Activated CD8-positive, alpha-beta T cell treated with anti-CD3 and anti-CD28 coated beads, Interleukin-2, amount 10 ng/mL, durations not matched to agents 7 days and 5 days (primary cell): ENCODE measurements at regions of chr11 and their contacts with region 1.

Region 1: DNA sequence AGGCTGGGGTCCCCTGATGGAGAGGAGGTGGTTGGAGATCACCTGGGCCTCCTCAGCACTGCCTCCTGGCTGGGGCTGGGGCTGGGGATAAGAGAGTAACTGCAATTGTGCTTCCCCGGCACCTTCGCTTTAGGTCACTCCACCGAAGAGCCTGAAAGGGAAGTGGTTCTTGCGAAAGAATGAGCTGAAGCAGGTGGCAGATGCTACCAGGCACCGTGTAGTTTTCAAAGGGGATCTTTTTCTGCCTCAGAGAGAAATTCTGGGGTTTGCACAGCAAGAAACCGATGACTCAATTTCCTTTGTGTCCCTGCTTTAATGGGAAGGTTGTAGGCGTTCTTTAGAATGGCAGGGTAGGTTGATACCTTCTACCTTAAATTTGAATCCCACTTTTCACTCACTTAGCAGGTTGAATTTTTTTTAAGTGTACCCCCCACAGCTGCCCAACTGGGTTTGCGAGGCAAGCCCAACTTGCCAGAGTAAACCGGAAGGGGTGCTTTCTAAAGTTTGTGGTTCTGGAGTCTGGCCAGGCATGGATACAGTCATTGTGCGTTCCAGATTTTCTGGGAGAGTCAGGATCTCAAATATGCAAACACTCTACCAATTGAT is 5.3 kb downstream of the CD44 start:
- DNase-seq: peak; percentile 81
- ATAC-seq: peak; percentile 31
- H3K4me3 Mint-ChIP-seq: peak overlapping the region; percentile 73
- H3K27ac Mint-ChIP-seq: peak overlapping the region; percentile 91
- H3K4me1 Mint-ChIP-seq: peaks cover 76% of the 10 kb centered on the region
- H3K27me3 Mint-ChIP-seq: no peaks in the 10 kb centered on the region

Region 2: GRCh38 chr11:35097814-35098455 is 46.3 kb before region 1 on chr11:
- CTCF ChIA-PET with region 1: no interaction called
- POLR2A ChIA-PET with region 1: no interaction called
- DNase-seq: no peak
- ATAC-seq: no peak
- H3K4me3 Mint-ChIP-seq: no peak overlapping the region
- H3K27ac Mint-ChIP-seq: no peak overlapping the region
- H3K4me1 Mint-ChIP-seq: peaks cover 17% of the 10 kb centered on the region
- H3K27me3 Mint-ChIP-seq: no peaks in the 10 kb centered on the region

Region 3: GRCh38 chr11:35158701-35159510 is 14.7 kb after region 1 on chr11:
- CTCF ChIA-PET with region 1: interaction called, 218 read pairs
- POLR2A ChIA-PET with region 1: interaction called, 19 read pairs
- DNase-seq: no peak
- ATAC-seq: no peak
- H3K4me3 Mint-ChIP-seq: peak overlapping the region; percentile 12
- H3K27ac Mint-ChIP-seq: peak overlapping the region; percentile 58
- H3K4me1 Mint-ChIP-seq: peaks cover 99% of the 10 kb centered on the region
- H3K27me3 Mint-ChIP-seq: no peaks in the 10 kb centered on the region

Region 4: GRCh38 chr11:35178873-35179272 is 34.6 kb after region 1 on chr11:
- CTCF ChIA-PET with region 1: interaction called, 15 read pairs
- POLR2A ChIA-PET with region 1: interaction called, 37 read pairs
- DNase-seq: no peak
- ATAC-seq: no peak
- H3K4me3 Mint-ChIP-seq: no peak overlapping the region
- H3K27ac Mint-ChIP-seq: peak overlapping the region; percentile 89
- H3K4me1 Mint-ChIP-seq: peaks cover 90% of the 10 kb centered on the region
- H3K27me3 Mint-ChIP-seq: no peaks in the 10 kb centered on the region

Region 5: DNA sequence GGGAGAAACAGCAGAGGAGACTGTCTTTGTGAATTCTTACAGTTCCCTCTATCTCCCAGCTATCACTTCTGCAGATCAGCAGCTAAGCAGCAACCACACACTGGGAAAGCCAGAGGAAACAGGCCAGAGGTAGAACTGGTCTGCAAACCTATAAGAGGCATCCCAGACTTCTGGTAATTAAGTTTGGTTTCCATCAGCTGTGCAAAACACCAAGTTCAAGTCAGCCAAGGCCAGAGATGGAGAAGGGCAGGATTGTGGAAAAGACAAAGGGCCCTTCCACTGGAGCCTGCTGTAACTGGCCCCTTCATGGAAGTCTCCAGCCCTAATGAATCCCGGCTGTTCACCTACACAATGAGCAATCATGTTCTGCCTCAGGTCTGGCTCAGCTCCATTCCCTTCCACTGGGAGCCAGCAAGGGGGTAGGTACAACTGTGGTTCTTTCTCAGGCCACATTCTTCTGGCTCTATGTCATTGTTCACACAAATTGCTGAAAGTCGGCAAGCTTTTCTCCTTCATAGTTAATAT is 385.8 kb after region 1 on chr11:
- CTCF ChIA-PET with region 1: no interaction called
- POLR2A ChIA-PET with region 1: no interaction called
- DNase-seq: no peak
- ATAC-seq: no peak
- H3K4me3 Mint-ChIP-seq: no peak overlapping the region
- H3K27ac Mint-ChIP-seq: no peak overlapping the region
- H3K4me1 Mint-ChIP-seq: no peaks in the 10 kb centered on the region
- H3K27me3 Mint-ChIP-seq: peaks cover 31% of the 10 kb centered on the region